Heart left ventricle (tissue), 16 donors: ENCODE measurements at regions of chr10 and their contacts with region 1.

Region 1: DNA sequence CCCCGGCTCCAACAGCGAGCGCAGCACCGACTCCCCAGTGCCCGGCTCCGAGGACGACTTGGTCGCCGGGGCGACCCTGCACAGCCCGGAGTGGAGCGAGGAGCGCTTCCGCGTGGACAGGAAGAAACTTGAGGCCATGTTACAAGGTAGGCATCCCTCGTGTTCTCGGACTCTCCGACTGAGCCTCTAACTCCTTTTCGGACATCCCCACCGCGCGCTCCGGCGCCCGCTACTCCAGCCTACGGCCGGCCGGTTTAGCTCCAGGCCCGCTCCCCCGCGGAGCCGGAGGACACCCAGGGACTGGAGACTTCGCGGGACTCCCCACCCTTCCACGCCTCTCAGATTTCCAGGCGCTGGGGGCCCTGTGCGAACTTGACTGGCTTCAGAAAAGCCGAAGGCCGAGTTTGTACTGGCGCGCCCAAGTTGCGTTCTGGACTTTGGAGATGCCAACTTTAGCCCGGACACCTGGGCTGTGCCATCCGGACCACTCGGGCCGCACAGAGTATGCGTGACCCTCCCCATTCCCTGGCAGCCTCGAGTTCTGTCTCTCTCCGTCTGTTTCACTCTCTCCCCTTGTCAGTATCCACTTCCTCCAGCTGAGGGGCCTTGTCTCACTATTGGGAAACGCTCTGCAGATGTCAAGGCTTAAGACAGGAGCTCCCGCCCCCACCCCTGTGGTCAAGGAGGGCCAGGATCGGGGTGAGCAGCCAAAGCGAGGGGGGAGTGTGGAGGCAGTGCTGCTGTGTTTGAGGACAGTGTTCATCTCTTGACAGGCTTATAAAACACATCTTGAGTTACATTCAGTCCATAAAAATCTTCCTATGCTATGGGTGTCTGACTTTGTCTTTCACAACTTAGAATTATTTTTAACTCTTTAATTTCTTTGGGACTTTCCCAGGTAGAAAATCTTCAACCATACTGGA is 777 bp downstream of the BICC1 start:
- DNase-seq: peak; percentile 64 to 71 (median 70)
- ATAC-seq: peak; percentile 64 to 88 (median 83)
- H3K4me3 ChIP-seq: peak overlapping the region; percentile 41 to 85 (median 62)
- H3K27ac ChIP-seq: peak overlapping the region; percentile 58 to 88 (median 74)
- H3K4me1 ChIP-seq: peaks cover 0 to 15% (median 0%) of the 10 kb centered on the region in 12 donors
- H3K27me3 ChIP-seq: peaks cover 0 to 49% (median 3%) of the 10 kb centered on the region in 9 donors
- CTCF ChIP-seq: no peak
- POLR2A ChIP-seq: no peak

Region 2: DNA sequence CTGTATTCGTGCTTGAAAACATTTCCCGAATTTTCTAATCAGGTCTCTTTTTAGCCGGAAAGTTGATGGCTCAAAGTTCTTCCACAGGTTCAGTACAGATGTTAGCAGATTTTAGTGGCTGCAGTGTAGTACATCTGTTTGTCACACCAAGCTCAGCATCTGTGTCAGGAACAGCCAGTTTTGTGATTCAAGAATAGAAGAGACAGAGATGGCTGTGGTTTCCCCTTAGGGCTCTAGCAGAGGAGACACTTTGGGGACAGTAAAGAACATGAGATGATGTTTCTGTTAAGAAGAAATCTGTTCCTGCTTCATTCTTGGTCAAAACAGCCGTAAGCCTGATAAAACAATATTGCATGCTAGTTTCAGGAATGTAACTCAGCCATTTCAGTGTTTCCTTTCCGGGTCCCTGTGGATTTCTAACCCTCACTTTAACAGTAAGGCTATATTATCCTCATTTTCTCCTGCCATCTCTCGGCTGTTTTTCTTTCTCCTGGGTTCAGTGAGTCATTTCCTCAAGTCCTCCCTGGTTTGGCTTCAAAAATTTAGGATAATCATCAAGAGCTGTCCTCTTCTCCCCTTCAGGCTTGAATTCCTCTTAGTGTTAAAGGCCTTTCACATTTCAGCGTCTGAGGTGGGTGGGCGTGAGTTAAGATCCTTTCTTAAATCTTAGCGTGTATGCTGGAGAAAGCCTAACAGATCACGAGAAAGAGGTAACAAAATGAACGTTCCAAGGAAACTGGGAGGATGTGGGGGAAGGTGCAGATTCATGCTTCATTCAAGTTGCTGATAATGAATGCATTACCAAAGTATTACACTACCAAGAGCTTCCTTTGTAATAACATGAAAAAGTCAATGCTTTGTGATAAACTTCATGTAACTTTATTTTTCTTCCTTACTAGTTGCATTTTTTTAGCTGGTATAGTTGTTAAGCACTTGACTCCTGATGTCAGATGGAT is 37.8 kb before region 1 on chr10:
- intact Hi-C with region 1: loop called in 1 of 10 experiments (anchors 5 kb)
- DNase-seq: no peak
- ATAC-seq: peak; percentile 61 to 84 (median 66)
- H3K4me3 ChIP-seq: peak overlapping the region in 8 of 12 donors; percentile 8 to 45 (median 27)
- H3K27ac ChIP-seq: peak overlapping the region; percentile 13 to 78 (median 56)
- H3K4me1 ChIP-seq: peaks cover 0 to 19% (median 0%) of the 10 kb centered on the region in 12 donors
- H3K27me3 ChIP-seq: peaks cover 0 to 4% (median 0%) of the 10 kb centered on the region in 9 donors
- CTCF ChIP-seq: no peak
- POLR2A ChIP-seq: no peak

Region 3: GRCh38 chr10:58775960-58776567 is 262.6 kb after region 1 on chr10:
- intact Hi-C with region 1: loop called in 1 of 10 experiments (anchors 10 kb)
- DNase-seq: peak in 2 of 5 donors; percentile 36 to 42
- ATAC-seq: peak; percentile 63 to 93 (median 86)
- H3K4me3 ChIP-seq: no peak overlapping the region
- H3K27ac ChIP-seq: peak overlapping the region in 6 of 12 donors; percentile 24 to 52 (median 38)
- H3K4me1 ChIP-seq: peaks cover 0 to 36% (median 1%) of the 10 kb centered on the region in 12 donors
- H3K27me3 ChIP-seq: no peaks in the 10 kb centered on the region
- CTCF ChIP-seq: no peak
- POLR2A ChIP-seq: no peak